HepG2 (cell line): ENCODE measurements at regions of chr11 and their contacts with region 1.

Region 1: DNA sequence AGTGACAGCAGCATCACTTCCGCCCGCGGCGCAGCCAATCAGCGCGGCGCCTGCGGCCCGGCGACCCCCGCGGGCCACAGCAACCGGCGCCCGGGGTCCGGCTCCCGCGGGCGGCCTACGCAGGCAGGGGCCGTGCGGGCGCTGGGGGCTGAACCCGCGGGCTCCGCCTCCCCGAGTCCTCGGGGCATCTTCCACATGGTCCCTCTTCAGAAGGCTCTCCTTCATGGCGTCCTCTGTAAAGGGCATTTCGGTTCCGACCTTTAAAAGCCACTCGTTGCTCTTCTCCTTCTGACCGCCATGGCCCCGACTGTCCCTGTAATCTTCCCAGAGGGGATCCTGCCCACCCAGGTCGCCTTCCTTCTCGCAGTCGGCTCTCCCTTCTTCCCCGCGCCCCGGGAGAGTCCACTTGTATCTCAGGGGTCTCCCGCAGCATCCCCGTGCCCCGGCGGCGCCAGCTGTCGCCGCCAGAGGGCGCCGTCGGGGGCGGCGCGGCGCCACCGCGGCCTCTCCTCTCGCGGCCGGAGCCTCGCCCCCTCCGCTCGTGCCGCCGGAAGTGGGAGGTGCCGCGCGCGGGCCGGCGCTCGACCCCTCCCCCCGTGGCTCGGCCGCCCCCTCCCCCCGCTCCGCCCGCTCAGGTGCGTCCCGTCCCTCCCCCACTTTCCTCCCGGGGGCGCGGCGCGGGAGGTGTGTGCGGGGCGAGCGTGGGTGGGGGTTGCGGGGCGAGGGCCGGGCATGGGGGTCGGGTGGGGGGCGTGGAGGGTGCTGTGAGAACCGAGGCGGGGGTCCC is at the start of gene RNF214:
- DNase-seq: peak; percentile 53
- ATAC-seq: peak; percentile 89
- H3K4me3 ChIP-seq: peak within 1 kb of the TSS; percentile 77 to 99 (median 99)
- H3K27ac ChIP-seq: peak within 1 kb of the TSS; percentile 57
- H3K4me1 ChIP-seq: peaks cover 27% of the 10 kb centered on the region
- H3K27me3 ChIP-seq: no peaks in the 10 kb centered on the region
- CTCF ChIP-seq: peak; percentile 74
- EP300 ChIP-seq: no peak
- POLR2A ChIP-seq: no peak
- RAD21 ChIP-seq: peak; percentile 83
- total RNA-seq, gene RNF214: 10.7 and 12.4 TPM in 2 replicates

Region 2: DNA sequence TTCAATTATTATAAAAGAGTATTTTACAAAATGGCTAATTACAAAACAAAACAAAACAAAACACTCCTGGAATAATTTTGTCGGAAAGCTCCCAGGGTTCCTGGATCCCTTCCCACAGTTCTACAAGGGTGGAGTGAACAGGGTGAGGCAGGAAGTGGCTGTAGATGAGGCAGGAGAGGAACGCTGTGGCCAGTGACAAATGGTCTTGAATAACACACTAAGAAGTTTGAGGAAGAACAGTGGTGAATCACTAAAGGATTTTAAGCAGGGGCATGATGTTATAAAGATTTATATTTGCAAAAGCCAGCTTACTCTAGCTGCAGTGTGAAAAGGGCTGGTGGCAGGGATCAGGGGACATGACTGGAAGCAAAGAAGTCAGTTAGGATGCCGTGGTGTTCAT is 361.0 kb before region 1 on chr11:
- CTCF ChIA-PET with region 1: no interaction called
- POLR2A ChIA-PET with region 1: no interaction called
- in situ Hi-C with region 1: loop called (anchors 5 kb)
- intact Hi-C with region 1: no loop called
- DNase-seq: no peak
- ATAC-seq: no peak
- H3K4me3 ChIP-seq: no peak overlapping the region
- H3K27ac ChIP-seq: no peak overlapping the region
- H3K4me1 ChIP-seq: peaks cover 20% of the 10 kb centered on the region
- H3K27me3 ChIP-seq: no peaks in the 10 kb centered on the region
- CTCF ChIP-seq: no peak
- EP300 ChIP-seq: no peak
- POLR2A ChIP-seq: no peak
- RAD21 ChIP-seq: no peak

Region 3: GRCh38 chr11:117410861-117411710 is 178.8 kb after region 1 on chr11:
- CTCF ChIA-PET with region 1: no interaction called
- POLR2A ChIA-PET with region 1: no interaction called
- in situ Hi-C with region 1: no loop called
- intact Hi-C with region 1: loop called (anchors 5 kb)
- DNase-seq: peak; percentile 67
- ATAC-seq: peak; percentile 90
- H3K4me3 ChIP-seq: no peak overlapping the region; a peak in 1 of 6 replicates
- H3K27ac ChIP-seq: peak overlapping the region; percentile 13
- H3K4me1 ChIP-seq: peaks cover 17% of the 10 kb centered on the region
- H3K27me3 ChIP-seq: no peaks in the 10 kb centered on the region
- CTCF ChIP-seq: peak; percentile 82
- EP300 ChIP-seq: no peak
- POLR2A ChIP-seq: no peak
- RAD21 ChIP-seq: 0 out of 2 replicates have a peak, but pooled peaks have one; percentile 23